ENCODE measurements at regions of chr18 and their contacts with region 1.

Region 1: GRCh38 chr18:11995445-11996189 is 14.3 kb downstream of the IMPA2 start:
- DNase-seq: peak; percentile 68
- ATAC-seq: peak; percentile 83
- H3K4me3 Mint-ChIP-seq: no peak overlapping the region
- H3K27ac Mint-ChIP-seq: peak overlapping the region; percentile 53
- H3K4me1 Mint-ChIP-seq: peaks cover 19% of the 10 kb centered on the region
- H3K27me3 Mint-ChIP-seq: no peaks in the 10 kb centered on the region

Region 2: DNA sequence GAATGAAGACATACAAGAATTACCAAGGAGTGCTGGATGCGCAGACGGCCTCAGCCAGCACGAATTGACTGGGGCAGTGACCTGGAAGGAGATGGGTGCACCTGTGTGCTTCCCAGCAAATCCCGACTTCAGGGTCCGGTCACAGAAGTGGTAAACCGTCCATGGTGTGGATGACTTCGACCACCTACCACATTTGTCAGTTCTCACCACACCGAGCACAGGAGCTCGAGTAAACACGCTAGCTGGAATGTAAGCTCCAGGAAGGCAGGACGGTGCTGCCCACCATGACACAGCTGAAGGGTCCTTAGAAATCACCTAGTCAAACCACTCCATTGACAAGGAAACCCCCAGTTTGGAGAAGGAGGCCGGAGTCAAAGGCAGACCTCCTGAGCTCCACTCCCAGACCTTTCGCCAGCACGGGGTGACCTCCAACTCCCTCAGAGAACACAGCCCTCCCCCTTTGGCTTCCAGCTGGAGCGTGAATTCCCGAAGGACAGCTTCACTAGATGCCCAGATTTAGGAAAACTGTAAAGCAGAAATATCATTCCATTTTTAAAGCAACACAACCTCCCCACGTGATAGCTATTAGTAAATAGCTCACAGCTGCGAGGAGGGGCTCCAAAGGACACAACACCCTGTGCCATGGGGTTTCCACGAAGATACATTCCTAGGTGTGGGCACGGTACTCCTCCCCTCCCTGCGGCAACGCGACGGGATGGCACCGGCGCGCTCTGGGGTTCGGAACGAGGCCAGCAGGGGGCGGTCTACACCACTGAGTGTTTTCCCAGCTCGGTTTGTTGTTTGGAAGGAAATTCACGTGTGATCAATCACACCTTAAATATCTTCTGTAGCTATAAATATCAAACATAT is 340.6 kb before region 1 on chr18:
- CTCF ChIA-PET with region 1: interaction called, 13 read pairs
- POLR2A ChIA-PET with region 1: no interaction called
- DNase-seq: peak; percentile 56
- ATAC-seq: peak; percentile 53
- H3K4me3 Mint-ChIP-seq: no peak overlapping the region
- H3K27ac Mint-ChIP-seq: no peak overlapping the region
- H3K4me1 Mint-ChIP-seq: no peaks in the 10 kb centered on the region
- H3K27me3 Mint-ChIP-seq: peaks cover 29% of the 10 kb centered on the region

Region 3: GRCh38 chr18:11733031-11733430 is 262.6 kb before region 1 on chr18:
- CTCF ChIA-PET with region 1: interaction called, 13 read pairs
- POLR2A ChIA-PET with region 1: interaction called, 3 read pairs
- DNase-seq: peak; percentile 77
- ATAC-seq: peak; percentile 93
- H3K4me3 Mint-ChIP-seq: no peak overlapping the region
- H3K27ac Mint-ChIP-seq: no peak overlapping the region
- H3K4me1 Mint-ChIP-seq: no peaks in the 10 kb centered on the region
- H3K27me3 Mint-ChIP-seq: peaks cover 16% of the 10 kb centered on the region

Region 4: GRCh38 chr18:11947214-11948191 is 48.1 kb before region 1 on chr18:
- CTCF ChIA-PET with region 1: interaction called, 282 read pairs
- POLR2A ChIA-PET with region 1: no interaction called
- DNase-seq: peak; percentile 70
- ATAC-seq: peak; percentile 84
- H3K4me3 Mint-ChIP-seq: peak overlapping the region; percentile 59
- H3K27ac Mint-ChIP-seq: peak overlapping the region; percentile 28
- H3K4me1 Mint-ChIP-seq: peaks cover 18% of the 10 kb centered on the region
- H3K27me3 Mint-ChIP-seq: no peaks in the 10 kb centered on the region

Region 5: GRCh38 chr18:11980555-11981382 is 14.8 kb before region 1 on chr18:
- CTCF ChIA-PET with region 1: interaction called, 36 read pairs
- POLR2A ChIA-PET with region 1: interaction called, 4 read pairs
- DNase-seq: peak; percentile 98
- ATAC-seq: peak; percentile 94
- H3K4me3 Mint-ChIP-seq: peak overlapping the region; percentile 87
- H3K27ac Mint-ChIP-seq: peak overlapping the region; percentile 78
- H3K4me1 Mint-ChIP-seq: peaks cover 17% of the 10 kb centered on the region
- H3K27me3 Mint-ChIP-seq: peaks cover 3% of the 10 kb centered on the region

Region 6: DNA sequence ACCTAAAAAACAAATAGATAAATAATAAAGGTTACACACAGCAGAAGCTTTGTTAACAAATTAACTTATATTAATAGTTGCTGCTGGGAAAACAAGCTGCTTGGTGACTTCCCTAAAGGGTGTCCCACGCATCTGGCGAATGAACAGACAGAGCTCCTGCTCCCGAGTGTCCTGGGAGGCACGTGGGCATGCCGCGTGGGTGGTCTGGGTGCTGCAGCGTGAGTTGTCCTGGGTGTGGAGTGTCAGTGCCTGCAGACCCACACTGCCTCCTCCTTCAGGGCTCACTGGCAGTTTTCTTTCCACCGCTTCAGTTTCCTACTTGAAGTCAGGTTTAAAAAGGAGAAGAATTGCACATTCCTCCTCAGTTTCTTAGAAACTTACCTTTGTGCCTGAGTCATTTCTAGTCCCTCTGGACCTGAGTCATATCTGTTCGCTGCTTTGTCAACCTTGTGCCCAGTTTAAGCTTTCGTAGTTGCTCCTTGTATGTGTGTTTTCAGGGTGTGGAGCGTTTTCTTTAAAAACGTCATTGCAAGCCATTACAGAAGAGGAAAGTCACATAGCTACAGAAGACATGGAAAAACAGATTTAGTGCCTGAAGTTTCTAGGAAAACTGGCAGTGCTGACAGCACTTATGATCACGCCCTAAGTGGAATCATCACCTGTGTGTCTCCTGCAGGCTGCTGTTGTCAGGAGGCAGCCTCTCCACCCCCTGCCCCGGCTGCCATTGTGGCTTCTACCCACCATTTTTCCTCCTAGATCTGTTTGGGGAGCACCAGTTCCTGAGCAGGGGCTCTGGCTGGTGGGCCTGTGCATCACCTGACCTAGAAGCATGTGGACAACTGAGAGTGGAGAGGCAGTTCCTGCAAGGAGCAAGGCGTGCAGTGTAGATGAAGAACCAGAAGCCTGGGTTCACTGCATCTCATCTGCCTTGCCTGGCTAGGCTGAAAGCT is 10.2 kb after region 1 on chr18:
- CTCF ChIA-PET with region 1: interaction called, 14 read pairs
- POLR2A ChIA-PET with region 1: no interaction called
- DNase-seq: no peak
- ATAC-seq: no peak
- H3K4me3 Mint-ChIP-seq: no peak overlapping the region
- H3K27ac Mint-ChIP-seq: no peak overlapping the region
- H3K4me1 Mint-ChIP-seq: no peaks in the 10 kb centered on the region
- H3K27me3 Mint-ChIP-seq: no peaks in the 10 kb centered on the region

Region 7: DNA sequence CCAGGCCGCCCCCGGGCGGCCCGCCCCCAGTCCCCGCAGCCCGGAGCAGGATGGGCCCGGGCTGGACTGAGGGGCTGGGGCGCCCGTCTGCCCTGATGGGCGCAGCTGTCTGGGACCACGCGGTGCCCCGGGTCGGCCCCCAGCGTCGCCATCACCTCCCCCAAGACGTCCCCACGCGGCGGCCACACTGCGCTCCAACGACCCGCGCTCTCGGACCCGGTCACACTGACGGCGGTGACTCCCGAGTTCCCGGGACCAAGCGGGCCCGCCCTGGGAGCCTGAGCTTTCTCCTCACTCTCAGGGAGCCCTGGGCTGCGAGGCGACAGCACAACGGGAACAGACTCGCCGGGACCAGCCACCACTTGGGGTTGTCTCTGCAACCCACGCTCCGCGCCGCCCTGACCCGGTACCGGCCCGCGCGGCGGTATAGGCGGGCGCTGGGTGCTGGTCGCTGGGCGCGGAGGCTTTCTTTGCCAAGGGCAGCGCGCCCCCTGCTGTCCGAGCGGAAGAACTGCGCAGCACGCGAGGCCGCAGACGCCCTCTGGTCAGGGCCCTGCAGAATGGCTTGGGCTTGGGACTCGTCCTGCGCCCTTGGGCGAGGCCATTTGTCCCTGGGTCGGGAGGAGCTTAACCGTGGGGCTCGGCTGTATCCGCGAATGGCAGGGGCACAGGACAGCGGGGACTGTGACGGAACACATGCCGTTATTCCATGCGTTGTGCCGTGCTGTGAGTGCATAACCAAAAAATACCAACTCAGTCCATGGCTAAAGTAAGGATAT is 43.2 kb after region 1 on chr18:
- CTCF ChIA-PET with region 1: interaction called, 20 read pairs
- POLR2A ChIA-PET with region 1: no interaction called
- DNase-seq: peak; percentile 77
- ATAC-seq: peak; percentile 93
- H3K4me3 Mint-ChIP-seq: peak overlapping the region; percentile 40
- H3K27ac Mint-ChIP-seq: no peak overlapping the region
- H3K4me1 Mint-ChIP-seq: peaks cover 1% of the 10 kb centered on the region
- H3K27me3 Mint-ChIP-seq: peaks cover 16% of the 10 kb centered on the region

Measured in activated CD8-positive, alpha-beta T cell treated with anti-CD3 and anti-CD28 coated beads, Interleukin-2, amount 10 ng/mL, durations not matched to agents 7 days and 5 days (primary cell).